Endothelial cell of umbilical vein (primary cell): ENCODE measurements at regions of chr20 and their contacts with region 1.

Region 1: GRCh38 chr20:17682103-17682888 is at the start of gene RRBP1:
- DNase-seq: peak; percentile 98
- H3K4me3 ChIP-seq: peak within 1 kb of the TSS; percentile 44 to 90 (median 71)
- H3K27ac ChIP-seq: peak within 1 kb of the TSS; percentile 76
- H3K4me1 ChIP-seq: peaks cover 13% of the 10 kb centered on the region
- H3K27me3 ChIP-seq: peaks cover 20 to 28% of the 10 kb centered on the region in 2 experiments
- CTCF ChIP-seq: peak; percentile 70 to 72
- POLR2A ChIP-seq: peak; percentile 96
- total RNA-seq, gene RRBP1: 201 and 236 TPM in 2 replicates

Region 2: GRCh38 chr20:17569616-17570346 is 112.5 kb before region 1 on chr20 and contains the start of gene DSTN:
- CTCF ChIA-PET with region 1: interaction called, 3 read pairs
- POLR2A ChIA-PET with region 1: no interaction called
- dilution Hi-C with region 1: no loop called
- intact Hi-C with region 1: loop called (anchors 1 kb)
- DNase-seq: peak; percentile 95
- H3K4me3 ChIP-seq: peak within 1 kb of the TSS; percentile 84 to 92 (median 88)
- H3K27ac ChIP-seq: peak within 1 kb of the TSS; percentile 91
- H3K4me1 ChIP-seq: peaks cover 23% of the 10 kb centered on the region
- H3K27me3 ChIP-seq: no peaks in the 10 kb centered on the region
- CTCF ChIP-seq: no peak
- POLR2A ChIP-seq: peak; percentile 87
- total RNA-seq, gene DSTN: 300 and 307 TPM in 2 replicates

Region 3: DNA sequence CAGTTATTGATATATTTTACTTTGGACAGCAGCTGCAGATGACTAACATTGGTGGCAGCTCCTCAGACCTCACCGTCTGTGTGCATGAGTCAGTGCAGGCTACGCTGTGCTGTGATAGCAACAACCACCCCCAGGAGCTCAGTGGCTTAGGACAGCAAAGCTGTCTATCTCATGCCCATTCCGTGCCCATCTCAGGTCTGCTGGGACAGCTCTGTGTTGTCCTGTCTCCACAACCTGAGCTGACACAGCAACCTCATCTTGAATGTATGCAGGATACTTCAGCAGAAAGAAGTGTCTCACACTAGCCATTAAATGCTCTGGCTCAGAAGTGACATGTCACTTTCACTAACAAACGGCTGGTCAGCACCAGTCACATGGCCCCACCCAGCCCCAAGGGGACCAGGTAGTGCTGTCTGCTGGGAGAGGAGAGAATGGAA is 65.2 kb after region 1 on chr20:
- CTCF ChIA-PET with region 1: interaction called, 10 read pairs
- POLR2A ChIA-PET with region 1: interaction called, 4 read pairs
- dilution Hi-C with region 1: no loop called
- intact Hi-C with region 1: loop called (anchors 1 kb)
- DNase-seq: peak; percentile 85
- H3K4me3 ChIP-seq: no peak overlapping the region
- H3K27ac ChIP-seq: peak overlapping the region; percentile 43
- H3K4me1 ChIP-seq: peaks cover 24% of the 10 kb centered on the region
- H3K27me3 ChIP-seq: no peaks in the 10 kb centered on the region
- CTCF ChIP-seq: no peak
- POLR2A ChIP-seq: no peak

Region 4: DNA sequence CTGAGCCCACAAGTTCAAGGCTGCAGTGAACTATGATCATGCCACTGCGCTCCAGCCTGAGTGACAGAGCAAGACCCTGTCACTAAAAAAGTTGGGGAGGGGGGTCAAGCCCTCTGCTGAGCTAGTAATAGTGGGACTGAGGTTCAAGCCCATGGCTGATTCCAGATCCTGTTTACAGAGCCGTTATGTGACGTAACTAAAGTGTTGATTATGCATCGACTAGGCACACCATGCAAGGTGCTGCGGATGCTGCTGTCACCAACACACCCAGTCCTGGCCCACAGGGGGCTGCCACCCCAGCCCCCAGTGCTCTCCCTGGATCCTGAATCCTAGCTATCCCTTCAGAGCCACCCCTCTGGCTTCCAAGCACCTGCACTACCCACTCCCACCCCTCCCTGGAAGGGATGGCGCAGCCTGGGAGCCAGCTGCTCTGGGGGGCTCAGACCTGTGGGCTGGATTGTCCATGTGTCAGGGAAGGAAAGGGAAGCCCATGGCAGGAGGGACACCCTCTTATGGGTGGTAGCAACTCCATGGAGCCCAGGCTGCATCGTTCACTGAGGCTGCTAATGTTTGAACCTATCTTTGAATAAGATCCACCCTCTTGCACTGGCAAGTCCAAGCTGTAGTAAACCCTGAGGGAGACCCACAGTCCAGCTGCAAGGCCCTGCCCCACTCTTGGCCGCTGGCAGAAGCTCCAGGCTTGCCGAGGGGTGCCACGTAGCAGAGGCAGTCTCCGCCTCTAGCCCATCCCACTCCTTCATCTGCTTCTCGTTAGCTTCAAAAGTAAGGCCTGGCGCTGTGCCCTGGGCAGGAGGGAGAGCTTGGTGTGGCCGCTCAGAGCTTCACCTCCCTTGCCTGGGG is 191.3 kb after region 1 on chr20:
- CTCF ChIA-PET with region 1: interaction called, 10 read pairs
- POLR2A ChIA-PET with region 1: interaction called, 4 read pairs
- dilution Hi-C with region 1: no loop called
- intact Hi-C with region 1: no loop called
- DNase-seq: peak; percentile 83
- H3K4me3 ChIP-seq: no peak overlapping the region
- H3K27ac ChIP-seq: no peak overlapping the region
- H3K4me1 ChIP-seq: no peaks in the 10 kb centered on the region
- H3K27me3 ChIP-seq: peaks cover 17 to 22% of the 10 kb centered on the region in 2 experiments
- CTCF ChIP-seq: no peak
- POLR2A ChIP-seq: no peak

Region 5: GRCh38 chr20:17995967-17996819 is 313.9 kb after region 1 on chr20:
- CTCF ChIA-PET with region 1: interaction called, 4 read pairs
- POLR2A ChIA-PET with region 1: no interaction called
- dilution Hi-C with region 1: no loop called
- intact Hi-C with region 1: loop called (anchors 1 kb)
- DNase-seq: peak; percentile 70
- H3K4me3 ChIP-seq: no peak overlapping the region
- H3K27ac ChIP-seq: no peak overlapping the region
- H3K4me1 ChIP-seq: peaks cover 16% of the 10 kb centered on the region
- H3K27me3 ChIP-seq: peaks cover 0 to 4% of the 10 kb centered on the region in 2 experiments
- CTCF ChIP-seq: peak; percentile 85 to 86
- POLR2A ChIP-seq: no peak